Activated B cell treated with CpG ODN at 0.5 μM for 24 hours (primary cell): ENCODE measurements at regions of chr12 and their contacts with region 1.

Region 1: DNA sequence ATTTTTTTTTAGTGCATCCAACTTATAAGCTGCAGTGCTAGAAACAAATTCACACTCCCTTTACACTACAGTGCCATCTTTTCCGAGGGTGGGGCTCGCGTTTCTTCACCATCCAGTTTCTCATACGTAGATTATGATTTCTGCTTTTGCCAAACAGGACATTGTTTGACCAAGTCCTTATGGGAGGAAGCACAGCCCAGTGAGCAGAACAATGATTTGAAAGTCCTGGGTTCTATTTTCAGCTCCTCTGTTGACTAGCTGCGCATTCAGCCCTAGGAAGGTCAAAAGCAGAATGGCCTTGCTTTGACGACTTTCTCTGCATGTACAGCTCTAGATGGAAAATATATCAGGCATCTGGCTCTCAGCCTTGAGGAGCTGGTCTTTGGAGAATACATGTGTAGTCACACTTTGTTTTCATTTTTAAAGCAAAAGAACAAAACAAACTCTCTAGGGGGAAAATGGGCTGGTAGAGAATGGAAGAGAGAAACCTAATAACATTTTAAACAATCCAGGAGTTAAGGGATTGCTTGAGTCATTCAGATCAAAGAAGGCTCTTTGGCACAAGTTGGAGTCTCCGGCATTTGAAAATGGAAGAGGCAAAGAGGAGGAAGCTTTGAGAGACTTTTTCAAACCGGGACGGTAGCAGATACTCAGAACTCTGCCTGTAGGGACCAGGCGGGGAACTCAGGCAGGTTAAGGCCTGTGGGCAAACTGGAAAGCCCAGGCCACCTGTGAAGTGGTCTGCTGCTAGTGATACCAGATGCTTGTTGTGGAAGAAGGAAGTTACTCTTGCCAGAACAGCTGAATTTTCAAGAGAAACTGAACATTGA is 257.3 kb upstream of the PLEKHG7 start:
- DNase-seq: peak; percentile 55
- ATAC-seq: peak; percentile 71
- H3K4me3 Mint-ChIP-seq: peak overlapping the region; percentile 67
- H3K27ac Mint-ChIP-seq: peak overlapping the region; percentile 97
- H3K4me1 Mint-ChIP-seq: peaks cover 95% of the 10 kb centered on the region
- H3K27me3 Mint-ChIP-seq: no peaks in the 10 kb centered on the region
- CTCF ChIP-seq: no peak

Region 2: DNA sequence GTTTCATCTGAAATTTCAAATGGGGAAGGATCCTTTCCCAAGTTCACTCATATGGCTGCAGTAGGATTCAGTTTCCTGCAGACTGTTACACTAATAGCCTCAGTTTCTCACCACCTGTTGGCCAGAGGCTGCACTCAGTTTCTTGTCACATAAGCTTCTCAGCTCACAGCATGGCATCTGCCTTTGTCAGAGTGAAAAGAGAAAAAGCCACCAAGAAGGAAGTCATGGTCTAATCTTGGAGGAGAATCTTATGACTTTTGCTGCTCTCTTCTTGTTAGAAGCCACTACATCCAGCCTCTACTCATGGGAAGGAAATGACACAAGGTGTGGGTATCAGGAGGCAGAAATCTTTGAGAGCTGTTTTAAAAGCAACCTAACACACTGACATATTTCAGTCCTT is 260.4 kb before region 1 on chr12:
- CTCF ChIA-PET with region 1: no interaction called
- POLR2A ChIA-PET with region 1: interaction called, 10 read pairs
- intact Hi-C with region 1: loop called (anchors 1 kb)
- DNase-seq: no peak
- ATAC-seq: peak; percentile 54
- H3K4me3 Mint-ChIP-seq: peak overlapping the region; percentile 76
- H3K27ac Mint-ChIP-seq: peak overlapping the region; percentile 95
- H3K4me1 Mint-ChIP-seq: peaks cover 57% of the 10 kb centered on the region
- H3K27me3 Mint-ChIP-seq: no peaks in the 10 kb centered on the region
- CTCF ChIP-seq: no peak

Region 3: GRCh38 chr12:92408072-92408900 is 37.2 kb before region 1 on chr12:
- CTCF ChIA-PET with region 1: interaction called, 16 read pairs
- POLR2A ChIA-PET with region 1: interaction called, 77 read pairs
- intact Hi-C with region 1: loop called (anchors 1 kb)
- DNase-seq: no peak
- ATAC-seq: peak; percentile 42
- H3K4me3 Mint-ChIP-seq: peak overlapping the region; percentile 50
- H3K27ac Mint-ChIP-seq: peak overlapping the region; percentile 88
- H3K4me1 Mint-ChIP-seq: peaks cover 68% of the 10 kb centered on the region
- H3K27me3 Mint-ChIP-seq: no peaks in the 10 kb centered on the region
- CTCF ChIP-seq: no peak

Region 4: DNA sequence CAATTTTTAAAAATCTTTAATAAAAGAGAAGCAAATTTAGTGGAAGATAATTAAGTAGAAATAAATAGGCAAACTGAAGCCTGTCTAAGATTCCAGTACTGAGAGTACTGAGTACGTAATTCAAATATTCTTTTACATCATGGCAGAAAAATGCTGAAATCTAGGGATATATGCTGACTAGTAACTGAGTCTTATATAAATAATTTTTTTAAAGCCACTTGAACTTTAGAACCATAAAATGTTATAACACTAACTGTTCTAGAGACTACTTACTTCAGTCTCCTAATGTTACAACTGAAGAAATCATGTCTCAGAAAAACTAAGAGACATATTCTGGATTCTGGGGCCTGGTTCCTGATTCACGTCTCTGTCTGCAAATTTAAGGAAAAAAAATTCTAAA is 26.7 kb after region 1 on chr12:
- CTCF ChIA-PET with region 1: interaction called, 7 read pairs
- POLR2A ChIA-PET with region 1: interaction called, 269 read pairs
- intact Hi-C with region 1: loop called (anchors 1 kb)
- DNase-seq: no peak
- ATAC-seq: no peak
- H3K4me3 Mint-ChIP-seq: peak overlapping the region; percentile 48
- H3K27ac Mint-ChIP-seq: peak overlapping the region; percentile 96
- H3K4me1 Mint-ChIP-seq: peaks cover 90% of the 10 kb centered on the region
- H3K27me3 Mint-ChIP-seq: no peaks in the 10 kb centered on the region
- CTCF ChIP-seq: no peak

Region 5: DNA sequence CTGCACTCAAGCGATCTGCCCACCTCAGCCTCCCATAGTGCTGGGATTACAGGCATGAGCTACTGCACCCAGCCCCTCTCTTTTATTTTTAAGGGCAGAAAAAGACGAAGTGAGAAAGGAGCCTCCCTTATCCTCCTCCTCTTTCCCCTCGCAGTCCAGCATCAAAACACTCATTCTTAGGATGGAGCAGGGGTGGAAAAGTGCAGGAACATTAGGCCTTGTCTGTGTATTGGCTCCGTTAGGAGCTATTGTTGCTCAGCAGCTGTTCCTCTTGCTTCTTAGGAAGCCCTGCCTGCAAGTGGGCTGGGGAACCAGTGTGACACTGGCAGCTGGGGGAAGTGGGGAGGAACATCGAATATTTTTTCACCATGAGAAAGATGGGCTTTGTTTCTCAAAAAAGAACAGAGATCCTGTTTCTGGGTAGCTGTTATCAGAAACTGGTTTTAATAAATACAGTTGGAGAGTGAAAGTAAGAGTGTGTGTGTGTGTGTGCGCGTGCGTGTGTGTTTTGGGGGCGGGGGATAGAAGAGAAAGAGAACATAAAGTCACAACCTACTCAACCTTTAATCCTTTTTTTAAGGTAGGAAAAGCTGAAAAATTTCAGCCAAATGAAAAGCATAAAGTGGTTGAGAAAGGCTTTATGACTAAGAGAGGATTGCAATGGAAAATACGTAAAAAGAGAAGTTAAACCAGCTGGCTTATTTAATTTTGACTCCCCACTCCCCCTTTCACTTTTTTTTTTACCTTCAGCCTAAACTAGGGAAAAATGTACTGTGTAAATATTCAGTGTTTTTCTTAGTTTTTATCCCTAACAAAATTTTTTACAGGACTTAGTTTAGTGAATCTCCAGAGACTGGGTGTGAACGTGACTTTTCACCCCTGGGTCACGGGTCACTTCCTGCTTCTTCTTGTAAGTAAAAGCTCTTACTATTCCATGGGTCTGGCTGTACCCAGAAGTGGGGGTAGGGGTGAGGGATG is 60.1 kb after region 1 on chr12:
- CTCF ChIA-PET with region 1: interaction called, 20 read pairs
- POLR2A ChIA-PET with region 1: interaction called, 167 read pairs
- intact Hi-C with region 1: loop called (anchors 1 kb)
- DNase-seq: peak; percentile 20
- ATAC-seq: peak; percentile 47
- H3K4me3 Mint-ChIP-seq: peak overlapping the region; percentile 77
- H3K27ac Mint-ChIP-seq: peak overlapping the region; percentile 94
- H3K4me1 Mint-ChIP-seq: peaks cover 64% of the 10 kb centered on the region
- H3K27me3 Mint-ChIP-seq: no peaks in the 10 kb centered on the region
- CTCF ChIP-seq: no peak

Region 6: DNA sequence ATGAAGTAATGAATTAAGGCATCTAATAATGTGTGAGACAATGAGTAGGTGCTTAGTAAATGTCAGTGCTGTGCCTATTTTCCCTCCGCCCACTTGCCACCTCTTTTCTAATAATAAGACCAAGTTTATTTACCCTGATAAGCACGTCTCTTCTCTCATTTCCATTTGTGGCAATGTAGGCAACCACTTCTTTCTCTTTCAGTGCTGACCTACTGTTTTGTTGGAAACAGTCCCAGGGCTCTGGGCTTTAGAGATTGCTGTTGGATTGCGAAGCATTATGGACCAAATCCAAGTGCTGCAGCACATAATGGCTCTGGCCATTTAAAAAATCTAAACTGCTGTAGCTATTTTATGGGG is 116.1 kb after region 1 on chr12:
- CTCF ChIA-PET with region 1: interaction called, 3 read pairs
- POLR2A ChIA-PET with region 1: interaction called, 18 read pairs
- intact Hi-C with region 1: loop called (anchors 1 kb)
- DNase-seq: no peak
- ATAC-seq: no peak
- H3K4me3 Mint-ChIP-seq: no peak overlapping the region
- H3K27ac Mint-ChIP-seq: peak overlapping the region; percentile 65
- H3K4me1 Mint-ChIP-seq: peaks cover 85% of the 10 kb centered on the region
- H3K27me3 Mint-ChIP-seq: no peaks in the 10 kb centered on the region
- CTCF ChIP-seq: no peak